OCI-LY7 (cell line): ENCODE measurements at regions of chr1 and their contacts with region 1.

Region 1: GRCh38 chr1:23403735-23404486 is 20.6 kb downstream of the TCEA3 start:
- DNase-seq: peak; percentile 76
- H3K4me3 ChIP-seq: no peak overlapping the region
- H3K27ac ChIP-seq: no peak overlapping the region
- H3K4me1 ChIP-seq: peaks cover 5% of the 10 kb centered on the region
- CTCF ChIP-seq: peak; percentile 94

Region 2: GRCh38 chr1:23290836-23291565 is 112.9 kb before region 1 on chr1:
- CTCF ChIA-PET with region 1: no interaction called
- POLR2A ChIA-PET with region 1: no interaction called
- intact Hi-C with region 1: loop called (anchors 5 kb)
- DNase-seq: no peak
- H3K4me3 ChIP-seq: no peak overlapping the region
- H3K27ac ChIP-seq: no peak overlapping the region
- H3K4me1 ChIP-seq: no peaks in the 10 kb centered on the region
- CTCF ChIP-seq: 0 out of 2 replicates have a peak, but pooled peaks have one; percentile 26

Region 3: DNA sequence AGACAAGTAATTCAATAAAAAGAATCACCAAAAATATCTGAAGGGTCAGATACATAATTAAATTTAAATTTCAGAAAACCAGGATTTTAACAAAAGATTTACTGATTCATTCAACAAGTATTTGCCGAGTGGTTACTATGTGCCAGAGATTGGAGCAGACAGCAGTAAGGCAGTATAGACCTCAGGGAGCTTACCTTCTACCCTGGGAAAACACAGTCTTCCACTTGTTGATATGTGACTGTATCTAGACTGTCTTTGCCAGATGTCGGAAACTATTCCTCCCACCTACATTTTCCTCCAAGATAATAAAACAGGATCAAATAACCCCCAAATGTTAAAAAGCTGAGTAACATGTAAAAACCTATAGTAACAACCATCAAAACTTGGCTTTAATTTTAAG is 66.0 kb before region 1 on chr1:
- CTCF ChIA-PET with region 1: no interaction called
- POLR2A ChIA-PET with region 1: no interaction called
- intact Hi-C with region 1: loop called (anchors 10 kb)
- DNase-seq: no peak
- H3K4me3 ChIP-seq: no peak overlapping the region
- H3K27ac ChIP-seq: no peak overlapping the region
- H3K4me1 ChIP-seq: peaks cover 36% of the 10 kb centered on the region
- CTCF ChIP-seq: no peak

Region 4: GRCh38 chr1:23367791-23368561 is 35.9 kb before region 1 on chr1:
- CTCF ChIA-PET with region 1: interaction called, 6 read pairs
- POLR2A ChIA-PET with region 1: interaction called, 3 read pairs
- intact Hi-C with region 1: loop called (anchors 2 kb)
- DNase-seq: peak; percentile 99
- H3K4me3 ChIP-seq: peak overlapping the region; percentile 77
- H3K27ac ChIP-seq: peak overlapping the region; percentile 76
- H3K4me1 ChIP-seq: peaks cover 28% of the 10 kb centered on the region
- CTCF ChIP-seq: no peak